Activated CD4-positive, alpha-beta T cell treated with anti-CD3 and anti-CD28 coated beads for 36 hours (primary cell): ENCODE measurements at regions of chr9 and their contacts with region 1.

Region 1: DNA sequence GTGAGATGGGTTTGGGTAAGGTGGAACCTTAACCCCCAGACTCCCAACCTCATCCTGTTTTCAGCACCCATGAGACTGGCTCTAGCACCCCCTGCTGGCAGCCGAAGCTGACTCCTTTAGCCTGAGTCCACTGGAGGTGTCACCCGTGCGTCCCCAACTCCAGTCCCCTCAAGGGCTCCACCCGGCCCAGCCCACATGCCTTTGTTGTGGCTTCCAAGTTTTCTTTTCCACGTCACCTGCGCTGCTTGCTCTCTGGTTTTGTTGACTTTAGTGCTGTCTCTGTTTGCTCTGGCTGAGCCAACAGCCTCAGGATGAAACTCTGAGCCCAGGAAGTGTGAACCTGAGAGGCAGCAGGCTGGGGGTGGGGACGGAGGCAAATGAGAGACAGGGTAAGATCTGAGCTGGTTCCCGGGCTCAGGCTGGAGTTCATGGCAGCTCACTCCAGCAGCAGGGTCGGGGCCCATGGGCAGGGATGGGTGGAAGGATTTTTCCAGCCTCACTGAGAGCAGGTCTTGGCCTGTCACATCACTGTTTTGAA is 13.2 kb upstream of the AQP7 start:
- DNase-seq: peak; percentile 97
- ATAC-seq: peak; percentile 92
- H3K4me3 Mint-ChIP-seq: peak overlapping the region; percentile 31
- H3K27ac Mint-ChIP-seq: peak overlapping the region; percentile 95
- H3K4me1 Mint-ChIP-seq: peaks cover 41% of the 10 kb centered on the region
- H3K27me3 Mint-ChIP-seq: no peaks in the 10 kb centered on the region

Region 2: DNA sequence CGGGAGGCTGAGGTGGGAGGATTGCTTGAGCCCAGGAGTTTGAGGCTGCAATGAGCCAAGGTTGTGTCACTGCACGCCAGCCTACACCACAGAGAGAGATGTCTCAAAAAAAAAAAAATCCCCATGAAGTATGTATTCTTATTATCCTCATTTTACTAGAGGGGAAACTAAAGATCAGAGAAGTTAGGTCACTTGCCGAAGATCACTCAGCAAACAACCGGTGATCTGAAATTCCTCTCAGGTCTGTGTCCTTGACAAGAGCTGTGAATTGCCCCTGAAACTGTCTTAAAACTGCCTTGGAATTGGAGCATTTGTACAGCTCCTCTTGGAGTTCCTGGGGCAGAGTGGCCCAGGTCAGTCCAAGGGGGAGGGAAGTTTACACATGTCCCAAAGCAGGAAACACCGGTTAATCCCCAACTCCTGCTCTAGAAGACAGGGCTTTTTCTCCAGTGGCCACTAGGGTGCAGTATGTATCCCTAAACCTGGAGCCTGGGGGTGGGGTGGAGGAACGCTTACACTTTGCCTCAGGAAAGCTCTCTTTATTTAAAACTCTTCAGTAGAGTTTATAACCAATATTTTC is 40.8 kb before region 1 on chr9:
- CTCF ChIA-PET with region 1: interaction called, 24 read pairs
- POLR2A ChIA-PET with region 1: no interaction called
- intact Hi-C with region 1: loop called in 1 of 2 experiments (anchors 1 kb)
- DNase-seq: peak; percentile 84
- ATAC-seq: peak; percentile 96
- H3K4me3 Mint-ChIP-seq: no peak overlapping the region
- H3K27ac Mint-ChIP-seq: no peak overlapping the region
- H3K4me1 Mint-ChIP-seq: peaks cover 7% of the 10 kb centered on the region
- H3K27me3 Mint-ChIP-seq: no peaks in the 10 kb centered on the region

Region 3: DNA sequence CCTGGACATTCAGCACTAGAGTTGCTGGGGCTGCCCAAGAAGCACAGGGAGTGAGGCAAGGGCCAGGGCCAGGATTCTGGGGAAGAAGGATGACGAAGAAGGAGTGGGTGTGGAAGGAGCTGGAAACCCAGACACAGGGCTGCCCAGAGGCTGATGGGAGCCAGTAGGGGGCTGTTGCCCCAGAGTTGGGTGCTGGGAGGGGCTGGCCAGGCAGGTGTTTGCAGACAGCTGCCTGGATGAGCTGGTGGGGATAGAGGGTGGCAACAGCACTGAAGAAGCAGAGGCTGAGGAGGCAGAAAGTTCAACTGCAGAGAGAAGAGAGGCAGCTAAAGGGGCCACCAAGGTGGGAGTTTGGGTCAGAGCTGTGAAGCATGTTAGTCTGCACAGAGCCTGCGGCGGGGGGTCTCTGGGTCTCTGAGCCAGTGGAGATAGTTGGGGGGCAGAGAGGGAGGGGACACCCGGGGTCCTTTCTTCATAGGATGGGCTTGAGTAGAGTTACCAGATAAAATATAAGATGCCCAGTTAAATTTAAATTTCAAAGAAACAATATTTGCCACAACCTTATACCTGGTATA is 10.7 kb before region 1 on chr9:
- CTCF ChIA-PET with region 1: interaction called, 22 read pairs
- POLR2A ChIA-PET with region 1: no interaction called
- intact Hi-C with region 1: no loop called
- DNase-seq: no peak
- ATAC-seq: no peak
- H3K4me3 Mint-ChIP-seq: no peak overlapping the region
- H3K27ac Mint-ChIP-seq: no peak overlapping the region
- H3K4me1 Mint-ChIP-seq: peaks cover 3% of the 10 kb centered on the region
- H3K27me3 Mint-ChIP-seq: no peaks in the 10 kb centered on the region

Region 4: DNA sequence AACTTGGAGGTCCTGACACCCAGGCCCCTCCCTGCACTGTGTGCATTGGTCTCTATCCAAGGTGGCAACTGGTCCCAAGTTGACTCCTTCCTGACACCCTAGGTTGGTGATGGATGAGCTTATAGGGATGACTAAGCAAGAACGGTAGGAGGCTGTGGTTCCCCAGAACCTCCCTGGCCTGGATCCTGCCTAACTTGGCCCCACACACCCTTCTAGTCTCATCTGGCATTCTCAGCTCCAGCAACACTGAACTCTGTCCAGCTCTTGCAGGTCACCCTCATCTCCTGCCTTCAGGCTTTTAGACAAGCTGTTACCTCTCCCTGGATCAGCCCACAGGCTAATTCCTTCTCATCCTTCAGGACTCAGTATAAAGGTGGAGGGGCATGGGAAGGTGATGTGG is 15.4 kb after region 1 on chr9:
- CTCF ChIA-PET with region 1: interaction called, 34 read pairs
- POLR2A ChIA-PET with region 1: no interaction called
- intact Hi-C with region 1: no loop called
- DNase-seq: no peak
- ATAC-seq: peak; percentile 47
- H3K4me3 Mint-ChIP-seq: no peak overlapping the region
- H3K27ac Mint-ChIP-seq: no peak overlapping the region
- H3K4me1 Mint-ChIP-seq: peaks cover 9% of the 10 kb centered on the region
- H3K27me3 Mint-ChIP-seq: no peaks in the 10 kb centered on the region

Region 5: GRCh38 chr9:33452828-33453271 is 37.3 kb after region 1 on chr9:
- CTCF ChIA-PET with region 1: interaction called, 36 read pairs
- POLR2A ChIA-PET with region 1: no interaction called
- intact Hi-C with region 1: loop called in 1 of 2 experiments (anchors 1 kb)
- DNase-seq: peak; percentile 83
- ATAC-seq: peak; percentile 87
- H3K4me3 Mint-ChIP-seq: peak overlapping the region; percentile 15
- H3K27ac Mint-ChIP-seq: peak overlapping the region; percentile 85
- H3K4me1 Mint-ChIP-seq: peaks cover 63% of the 10 kb centered on the region
- H3K27me3 Mint-ChIP-seq: no peaks in the 10 kb centered on the region

Region 6: GRCh38 chr9:33466565-33467495 is 51.3 kb after region 1 on chr9:
- CTCF ChIA-PET with region 1: interaction called, 32 read pairs
- POLR2A ChIA-PET with region 1: no interaction called
- intact Hi-C with region 1: no loop called
- DNase-seq: peak; percentile 85
- ATAC-seq: peak; percentile 88
- H3K4me3 Mint-ChIP-seq: no peak overlapping the region
- H3K27ac Mint-ChIP-seq: no peak overlapping the region
- H3K4me1 Mint-ChIP-seq: peaks cover 10% of the 10 kb centered on the region
- H3K27me3 Mint-ChIP-seq: no peaks in the 10 kb centered on the region